Activated T-helper 1 cell treated with anti-CD3 and anti-CD28 coated beads, Interleukin-12 subunit alpha, Interleukin-12 subunit beta, Interleukin-2, Interleukin-4 antibody, amounts not matched to agents 30 ng/mL and 10 ng/mL and 1 ng/mL, durations not matched to agents 14 hours and 24 hours and 36 hours (primary cell): ENCODE measurements at regions of chr15 and their contacts with region 1.

Region 1: DNA sequence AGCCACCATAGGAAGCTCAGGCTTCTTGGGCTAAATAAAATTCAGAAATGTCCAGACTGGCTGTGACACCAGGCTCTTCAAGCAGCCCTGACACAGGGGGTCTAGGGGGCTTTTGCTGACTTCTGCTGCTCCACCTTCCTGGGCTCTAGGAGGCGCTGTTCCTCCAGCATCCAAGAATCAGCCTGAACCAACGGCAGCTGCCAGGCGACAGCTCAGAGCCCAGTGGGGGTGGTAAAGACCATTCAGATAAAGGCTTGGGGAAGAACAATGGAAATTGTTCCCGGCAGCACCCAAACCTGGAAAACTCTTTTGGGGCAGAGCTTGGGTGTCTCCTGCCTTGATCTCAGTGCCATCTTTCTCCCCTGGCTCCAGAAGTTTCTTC is 21.6 kb upstream of the PSTPIP1 start:
- DNase-seq: no peak
- H3K4me3 Mint-ChIP-seq: no peak overlapping the region
- H3K27ac Mint-ChIP-seq: no peak overlapping the region
- H3K4me1 Mint-ChIP-seq: peaks cover 36% of the 10 kb centered on the region
- H3K27me3 Mint-ChIP-seq: peaks cover 4% of the 10 kb centered on the region

Region 2: DNA sequence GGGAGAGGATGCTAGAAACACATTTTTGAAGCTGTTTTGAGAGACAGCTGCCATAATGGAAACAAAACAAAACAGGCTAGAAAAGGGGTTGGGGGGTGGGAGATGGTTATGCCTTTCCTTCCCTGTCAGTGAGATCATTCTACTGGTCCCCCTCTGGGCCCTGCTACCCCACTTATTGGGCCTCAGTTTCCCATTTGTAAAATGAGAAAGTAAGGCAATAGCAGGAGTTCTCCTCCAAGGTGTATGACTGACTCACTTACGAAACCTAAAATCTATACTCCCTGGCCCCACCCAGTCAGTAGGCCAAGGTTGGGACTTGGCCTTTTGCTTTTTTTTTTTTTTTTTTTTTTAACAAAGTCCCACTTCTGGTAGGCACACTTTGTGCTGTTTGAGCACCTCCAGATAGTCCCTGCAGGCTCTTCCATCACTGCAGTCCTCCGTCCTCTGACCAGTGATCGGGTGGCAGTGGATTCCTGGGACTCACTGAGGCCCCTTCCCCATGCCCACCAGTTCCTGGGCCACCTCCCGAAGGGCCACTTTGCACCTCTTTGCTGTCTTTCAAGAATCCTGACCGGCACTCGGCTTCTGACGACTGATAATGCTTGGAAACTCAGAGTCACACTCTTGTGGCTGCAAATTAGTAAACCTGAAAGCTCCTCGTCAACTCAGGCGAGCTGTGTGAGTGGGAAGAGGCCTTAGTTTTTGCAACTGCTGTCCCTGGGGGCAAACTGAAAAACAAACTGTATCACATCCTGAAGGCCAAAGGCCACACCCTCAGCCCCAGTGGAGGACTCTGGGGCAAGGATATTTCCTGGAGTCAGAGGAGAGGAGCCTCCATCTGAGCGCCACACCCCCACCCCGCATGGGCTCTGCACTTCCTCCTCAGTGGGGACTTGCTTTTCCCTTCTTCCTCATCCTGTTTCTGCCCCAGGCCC is 14.8 kb after region 1 on chr15:
- intact Hi-C with region 1: loop called (anchors 1 kb)
- DNase-seq: peak; percentile 76
- H3K4me3 Mint-ChIP-seq: peak overlapping the region; percentile 73
- H3K27ac Mint-ChIP-seq: peak overlapping the region; percentile 99
- H3K4me1 Mint-ChIP-seq: peaks cover 90% of the 10 kb centered on the region
- H3K27me3 Mint-ChIP-seq: no peaks in the 10 kb centered on the region

Region 3: GRCh38 chr15:77002954-77003912 is 29.9 kb after region 1 on chr15:
- intact Hi-C with region 1: loop called (anchors 1 kb)
- DNase-seq: peak; percentile 74
- H3K4me3 Mint-ChIP-seq: peak overlapping the region; percentile 80
- H3K27ac Mint-ChIP-seq: peak overlapping the region; percentile 96
- H3K4me1 Mint-ChIP-seq: peaks cover 86% of the 10 kb centered on the region
- H3K27me3 Mint-ChIP-seq: no peaks in the 10 kb centered on the region

Region 4: DNA sequence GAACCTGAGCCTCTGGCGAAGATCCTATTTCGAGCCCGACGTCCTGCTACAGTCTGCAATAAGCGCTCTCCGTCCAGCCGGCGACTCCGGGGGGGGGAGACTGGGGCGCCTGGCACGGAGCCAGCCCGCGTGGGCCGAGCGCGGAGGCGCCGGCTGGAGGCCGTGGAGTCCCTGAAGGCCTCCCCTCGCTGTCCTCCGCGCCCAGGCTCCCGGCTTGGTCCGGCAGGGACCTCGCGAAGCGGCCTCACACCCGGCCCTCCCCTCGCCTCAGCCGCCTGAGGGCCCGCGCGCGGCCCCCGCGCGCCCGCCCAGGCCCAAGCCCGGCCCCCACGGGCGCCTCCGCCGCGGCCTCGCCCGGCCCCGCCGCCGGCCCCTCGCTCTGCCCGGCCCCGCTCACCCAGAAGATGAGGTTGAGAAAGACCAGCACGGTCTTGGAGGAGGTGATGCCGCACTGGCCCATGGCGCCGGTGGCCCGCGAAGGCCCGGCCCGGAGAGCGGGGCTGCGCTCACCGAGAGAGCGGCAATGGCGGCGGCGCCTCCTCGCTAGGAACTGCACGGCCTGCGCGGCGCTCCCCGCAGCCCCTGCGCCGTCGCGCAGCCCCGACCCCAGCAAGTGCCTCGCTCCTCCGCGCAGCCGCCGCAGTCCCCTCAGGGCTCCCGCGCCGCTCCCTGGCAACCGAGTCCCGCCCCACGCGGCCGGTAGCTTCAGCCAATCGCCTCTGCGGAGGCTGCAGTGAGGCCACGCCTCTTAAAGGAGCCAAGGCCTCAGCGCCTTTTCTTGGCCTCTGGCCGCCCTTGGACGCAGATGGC is 97.3 kb after region 1 on chr15 and contains the start of gene TSPAN3:
- intact Hi-C with region 1: loop called (anchors 1 kb)
- DNase-seq: peak; percentile 91
- H3K4me3 Mint-ChIP-seq: peak within 1 kb of the TSS; percentile 87
- H3K27ac Mint-ChIP-seq: peak within 1 kb of the TSS; percentile 42
- H3K4me1 Mint-ChIP-seq: peaks cover 27% of the 10 kb centered on the region
- H3K27me3 Mint-ChIP-seq: peaks cover 19% of the 10 kb centered on the region
- total RNA-seq, gene TSPAN3: 41.5 and 41.6 TPM in 2 replicates

Region 5: DNA sequence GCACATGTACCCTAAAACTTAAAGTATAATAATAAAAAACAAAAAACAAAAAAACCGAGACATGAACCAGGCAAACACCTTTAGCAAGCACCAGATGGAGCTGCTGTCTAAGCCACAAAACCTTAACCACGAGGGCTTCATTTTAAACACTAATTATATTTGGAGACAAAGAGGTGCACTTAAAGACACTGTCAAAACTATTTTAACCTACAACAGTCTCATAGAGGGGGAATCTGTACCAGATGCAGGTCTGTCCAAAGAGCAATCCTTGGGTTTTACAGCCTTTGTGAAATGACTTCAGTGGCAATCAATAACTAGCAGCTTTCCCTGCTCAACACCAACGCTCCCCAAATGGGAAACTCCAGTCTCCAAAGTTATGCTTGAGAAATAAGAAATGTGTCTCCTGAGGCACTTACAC is 213.2 kb after region 1 on chr15:
- intact Hi-C with region 1: loop called (anchors 5 kb)
- DNase-seq: no peak
- H3K4me3 Mint-ChIP-seq: no peak overlapping the region
- H3K27ac Mint-ChIP-seq: peak overlapping the region; percentile 37
- H3K4me1 Mint-ChIP-seq: peaks cover 69% of the 10 kb centered on the region
- H3K27me3 Mint-ChIP-seq: no peaks in the 10 kb centered on the region

Region 6: GRCh38 chr15:77329202-77329601 is 355.8 kb after region 1 on chr15:
- intact Hi-C with region 1: no loop called
- DNase-seq: no peak
- H3K4me3 Mint-ChIP-seq: no peak overlapping the region
- H3K27ac Mint-ChIP-seq: no peak overlapping the region
- H3K4me1 Mint-ChIP-seq: no peaks in the 10 kb centered on the region
- H3K27me3 Mint-ChIP-seq: no peaks in the 10 kb centered on the region

Region 7: DNA sequence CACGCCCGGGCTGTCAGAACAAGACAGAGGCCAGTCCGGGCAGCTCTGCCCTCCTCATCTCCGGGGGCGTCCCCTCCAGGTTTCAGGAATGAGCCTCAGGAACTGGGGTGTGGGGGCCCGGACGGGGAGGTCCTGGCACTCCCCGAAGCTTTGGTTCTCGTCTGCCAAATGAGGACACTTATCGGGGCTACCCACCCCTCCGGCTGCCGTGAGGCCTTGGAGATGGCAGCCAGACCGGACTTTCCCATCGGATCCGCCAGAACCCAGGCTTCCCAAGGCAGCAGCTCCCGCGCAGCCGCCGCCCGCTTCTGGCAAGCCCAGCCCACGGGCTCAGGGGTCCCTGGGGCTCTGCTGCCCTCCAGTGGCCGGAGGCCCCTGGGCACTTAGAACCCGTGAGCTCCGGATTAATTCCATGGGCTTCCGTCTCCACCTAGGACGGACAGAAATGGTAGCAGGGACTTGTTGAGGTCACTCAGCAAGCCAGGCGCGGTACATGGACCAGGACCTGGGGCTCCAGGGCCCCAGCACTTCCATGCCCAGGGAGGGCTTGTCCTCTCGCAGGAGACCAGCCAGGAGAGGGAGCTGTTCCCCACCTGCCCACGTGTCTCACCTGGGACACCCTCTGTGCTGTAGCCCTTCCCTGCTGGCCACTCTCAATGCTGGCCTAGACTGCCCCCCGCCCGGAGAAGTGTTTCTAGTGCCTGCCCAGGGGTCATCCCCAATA is 570.0 kb after region 1 on chr15:
- intact Hi-C with region 1: loop called (anchors 1 kb)
- DNase-seq: peak; percentile 64
- H3K4me3 Mint-ChIP-seq: peak overlapping the region; percentile 76
- H3K27ac Mint-ChIP-seq: no peak overlapping the region
- H3K4me1 Mint-ChIP-seq: peaks cover 8% of the 10 kb centered on the region
- H3K27me3 Mint-ChIP-seq: peaks cover 15% of the 10 kb centered on the region